ENCODE measurements at regions of chr3 and their contacts with region 1.

Region 1: DNA sequence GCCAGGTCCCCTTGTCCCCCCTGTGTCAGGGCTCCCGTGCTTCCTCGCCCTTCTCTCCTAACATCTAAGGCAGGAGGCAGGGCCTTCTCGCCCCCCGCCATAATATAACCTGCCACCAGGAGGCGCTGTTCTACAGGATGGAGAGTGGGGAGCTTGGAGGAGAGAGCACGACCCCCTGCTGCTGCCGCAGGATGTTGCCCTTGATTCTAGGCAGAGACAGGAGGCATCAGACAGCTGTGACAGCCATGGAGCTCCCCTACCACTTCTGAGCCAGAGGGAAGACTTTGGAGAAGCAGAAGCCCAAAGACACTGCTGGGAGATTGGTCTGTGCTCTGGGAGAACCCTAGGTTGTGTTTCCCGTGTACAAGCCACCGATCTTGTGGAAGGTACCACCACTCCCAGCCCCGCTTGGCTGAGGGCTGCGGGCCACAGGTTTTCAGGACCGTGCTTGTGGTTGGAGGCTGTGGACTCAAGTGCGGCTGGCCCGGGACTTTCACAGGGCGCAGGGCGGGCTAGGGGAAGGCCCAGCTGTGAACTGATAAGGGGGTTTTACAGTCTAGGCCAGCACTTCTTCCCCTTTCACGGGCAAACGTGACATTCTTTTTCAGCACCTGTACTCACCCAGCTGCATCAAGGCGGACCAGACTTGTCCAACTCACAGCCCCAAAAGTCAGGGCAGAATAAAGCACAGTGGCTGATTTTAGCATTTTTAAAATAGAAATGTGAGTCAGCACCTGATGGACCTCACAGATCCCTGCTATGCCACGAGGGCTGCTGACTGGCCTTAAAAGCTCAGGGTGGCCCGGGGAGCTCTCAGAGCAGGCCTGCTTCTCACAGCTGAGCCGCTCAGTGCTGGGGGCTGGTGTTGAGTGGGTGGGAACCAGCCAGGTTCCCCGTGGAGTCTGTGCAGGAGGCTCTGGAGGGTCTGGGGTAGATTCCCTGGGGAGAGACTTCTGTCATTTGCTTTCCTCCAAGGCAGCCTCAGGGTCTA is 2.6 kb upstream of the TIGIT start:
- DNase-seq: peak; percentile 57
- H3K4me3 Mint-ChIP-seq: no peak overlapping the region
- H3K27ac Mint-ChIP-seq: peak overlapping the region; percentile 68
- H3K4me1 Mint-ChIP-seq: peaks cover 18% of the 10 kb centered on the region
- H3K27me3 Mint-ChIP-seq: no peaks in the 10 kb centered on the region

Region 2: DNA sequence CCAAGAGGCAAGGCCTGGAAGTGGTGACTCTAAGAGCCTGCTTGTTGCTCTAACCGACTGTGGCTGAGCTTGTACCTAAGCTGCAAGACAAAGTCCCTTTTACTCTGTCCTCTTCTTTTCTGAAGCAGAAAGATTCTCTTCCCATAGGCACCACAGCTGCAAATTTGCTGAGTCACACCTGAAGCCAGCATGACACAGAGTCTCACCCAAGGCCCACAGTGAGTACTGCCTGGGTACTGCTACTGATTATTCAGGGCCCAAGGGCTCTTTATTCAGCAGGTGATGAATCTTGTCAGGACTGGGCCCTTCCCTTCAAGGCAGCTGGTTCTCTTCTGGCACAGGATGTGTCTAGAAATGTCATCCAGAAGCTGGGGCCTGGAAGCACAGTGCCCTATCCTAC is 16.3 kb before region 1 on chr3:
- intact Hi-C with region 1: no loop called
- DNase-seq: no peak
- H3K4me3 Mint-ChIP-seq: no peak overlapping the region
- H3K27ac Mint-ChIP-seq: no peak overlapping the region
- H3K4me1 Mint-ChIP-seq: no peaks in the 10 kb centered on the region
- H3K27me3 Mint-ChIP-seq: no peaks in the 10 kb centered on the region

Region 3: GRCh38 chr3:114332342-114333179 is 41.4 kb after region 1 on chr3:
- intact Hi-C with region 1: loop called (anchors 2 kb)
- DNase-seq: no peak
- H3K4me3 Mint-ChIP-seq: peak overlapping the region; percentile 20
- H3K27ac Mint-ChIP-seq: peak overlapping the region; percentile 86
- H3K4me1 Mint-ChIP-seq: peaks cover 51% of the 10 kb centered on the region
- H3K27me3 Mint-ChIP-seq: peaks cover 3% of the 10 kb centered on the region

Region 4: DNA sequence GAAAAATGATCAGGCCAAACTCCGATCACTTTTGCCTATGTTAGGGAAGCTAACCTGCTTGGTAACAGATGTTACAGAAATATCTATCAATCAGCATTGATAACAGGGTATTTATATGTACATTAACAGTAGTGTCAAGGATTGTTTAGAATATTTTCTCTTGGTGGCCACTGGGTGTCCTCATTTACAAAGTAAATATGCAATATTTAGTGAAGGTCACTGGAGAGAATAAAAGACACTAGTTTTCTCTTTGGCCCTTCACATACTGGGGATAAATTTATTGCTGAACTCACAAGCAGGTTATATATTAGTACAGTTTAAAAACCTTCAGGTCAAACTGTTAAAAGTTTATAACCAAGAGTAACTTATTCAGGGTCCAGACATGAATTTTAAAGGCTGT is 71.6 kb after region 1 on chr3:
- intact Hi-C with region 1: loop called (anchors 2 kb)
- DNase-seq: no peak
- H3K4me3 Mint-ChIP-seq: no peak overlapping the region
- H3K27ac Mint-ChIP-seq: no peak overlapping the region
- H3K4me1 Mint-ChIP-seq: no peaks in the 10 kb centered on the region
- H3K27me3 Mint-ChIP-seq: peaks cover 3% of the 10 kb centered on the region

Region 5: GRCh38 chr3:114383875-114384557 is 92.8 kb after region 1 on chr3:
- intact Hi-C with region 1: loop called (anchors 1 kb)
- DNase-seq: peak; percentile 34
- H3K4me3 Mint-ChIP-seq: peak overlapping the region; percentile 63
- H3K27ac Mint-ChIP-seq: peak overlapping the region; percentile 56
- H3K4me1 Mint-ChIP-seq: peaks cover 9% of the 10 kb centered on the region
- H3K27me3 Mint-ChIP-seq: peaks cover 3% of the 10 kb centered on the region